ENCODE measurements at regions of chr1 and their contacts with region 1.

Region 1: DNA sequence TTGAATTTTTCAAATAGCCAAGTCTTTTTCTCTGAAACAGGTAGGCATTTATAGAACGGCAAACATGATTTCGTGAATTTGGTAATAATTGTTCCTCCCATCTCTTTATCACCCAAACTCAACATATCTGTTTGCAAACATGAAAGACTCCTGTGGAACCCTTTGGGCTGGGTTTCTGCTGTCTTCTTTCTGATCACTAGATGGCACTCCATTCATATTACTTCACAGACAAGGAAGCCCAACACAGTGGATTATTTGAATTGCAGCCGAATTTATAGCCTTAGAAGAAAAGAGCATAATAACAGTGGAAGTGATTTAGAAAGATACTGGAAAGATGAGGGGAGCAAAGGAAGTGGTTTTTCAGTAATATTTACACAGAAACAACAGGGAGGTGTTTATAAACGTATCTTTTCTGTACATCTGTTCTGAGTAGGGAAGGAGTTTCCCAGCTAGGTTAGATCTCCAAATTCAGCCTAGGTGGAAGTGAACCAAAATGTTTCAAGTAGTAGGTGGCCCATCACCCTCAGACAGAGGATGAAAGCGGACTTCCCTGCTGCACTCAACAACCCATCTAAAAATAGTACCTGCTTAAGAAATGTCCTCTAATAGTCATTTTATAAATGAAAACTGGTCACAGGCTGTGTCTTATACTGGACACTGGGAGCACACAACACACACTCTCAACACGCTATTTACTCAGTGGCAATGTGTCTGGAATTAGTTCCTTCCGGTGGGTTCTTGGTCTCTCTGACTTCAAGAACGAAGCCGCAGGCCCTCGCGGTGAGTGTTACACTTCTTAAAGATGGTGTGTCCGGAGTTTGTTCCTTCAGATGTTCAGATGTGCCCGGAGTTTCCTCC is 67.6 kb downstream of the MAP3K21 start:
- DNase-seq: no peak
- H3K4me3 ChIP-seq: no peak overlapping the region
- CTCF ChIP-seq: no peak
- POLR2A ChIP-seq: no peak

Region 2: DNA sequence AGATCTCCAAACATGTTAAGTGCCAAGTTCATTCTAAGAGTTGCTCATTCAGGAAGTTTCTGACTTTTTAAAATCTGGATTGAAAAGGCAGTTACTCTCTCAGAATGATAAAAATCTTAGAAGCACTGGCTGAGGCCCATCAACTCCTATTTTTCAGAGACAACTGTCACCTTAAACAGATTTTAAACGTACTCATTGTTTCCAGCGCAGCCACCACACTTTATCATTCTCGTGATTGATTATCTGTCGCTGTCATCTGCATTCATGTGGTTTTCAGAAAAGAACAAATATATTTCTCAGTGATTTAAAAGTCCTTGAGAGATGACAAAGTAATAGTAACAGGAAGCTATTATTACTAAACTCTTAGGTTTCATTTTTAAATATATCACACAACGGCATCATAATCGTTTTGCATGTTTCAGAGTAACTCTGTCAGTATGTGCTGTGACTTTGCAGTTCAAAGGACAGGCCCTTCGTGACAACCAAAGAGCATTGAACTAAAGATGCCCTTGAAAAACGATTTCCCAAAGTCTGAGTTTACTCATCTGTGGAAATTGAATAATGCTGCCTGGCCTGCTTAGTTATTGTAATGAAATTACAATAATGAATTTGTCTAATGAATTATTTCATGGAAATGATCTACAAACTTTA is 203.9 kb after region 1 on chr1:
- intact Hi-C with region 1: no loop called
- DNase-seq: no peak
- H3K4me3 ChIP-seq: no peak overlapping the region
- CTCF ChIP-seq: no peak
- POLR2A ChIP-seq: no peak

Region 3: GRCh38 chr1:233790662-233791375 is 395.7 kb after region 1 on chr1:
- intact Hi-C with region 1: loop called (anchors 10 kb)
- DNase-seq: peak in 1 of 2 donors; percentile 16
- H3K4me3 ChIP-seq: no peak overlapping the region
- CTCF ChIP-seq: peak in 1 of 3 donors; percentile 45
- POLR2A ChIP-seq: no peak

Region 4: DNA sequence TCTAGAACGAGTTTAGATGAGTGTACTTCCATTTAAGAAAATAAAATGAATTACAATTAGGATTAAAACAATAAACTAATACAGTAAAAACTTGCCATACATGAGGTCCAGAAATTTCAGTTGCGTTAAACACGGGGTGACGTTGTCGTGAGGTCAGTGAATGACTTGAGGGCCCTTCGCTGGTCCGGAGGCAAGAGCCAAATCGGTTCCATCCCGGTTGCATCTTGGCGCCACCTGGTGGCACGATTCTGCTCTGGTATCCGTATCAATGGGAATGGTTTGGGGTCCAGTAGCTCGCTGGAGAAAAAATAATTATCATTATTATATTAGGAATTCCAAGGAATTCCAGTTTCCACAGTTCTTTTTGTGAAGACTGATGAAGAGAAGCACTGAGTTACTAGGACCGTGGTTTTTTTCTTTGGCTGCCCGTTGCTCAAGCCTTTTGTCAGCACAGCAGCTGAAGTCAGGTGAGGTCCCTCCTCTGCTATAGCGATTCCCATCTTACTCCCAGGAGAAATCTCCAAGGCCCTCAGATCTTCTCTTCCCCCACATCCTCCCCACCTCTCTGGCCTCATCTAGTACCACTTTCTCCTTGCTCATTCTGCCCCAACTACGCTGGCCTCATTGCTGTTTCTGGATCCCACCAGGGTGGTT is 670.8 kb after region 1 on chr1:
- intact Hi-C with region 1: loop called (anchors 10 kb)
- DNase-seq: peak; percentile 53 to 89
- H3K4me3 ChIP-seq: no peak overlapping the region
- CTCF ChIP-seq: no peak
- POLR2A ChIP-seq: no peak

Measured in lower leg skin (tissue), 4 donors.